Cardiac septum (tissue), 1 donor: ENCODE measurements at regions of chr22 and their contacts with region 1.

Region 1: GRCh38 chr22:49936018-49936952 is 17.9 kb downstream of the CRELD2 start:
- DNase-seq: peak; percentile 98

Region 2: GRCh38 chr22:49960159-49961004 is 24.1 kb after region 1 on chr22 and contains the start of gene PIM3:
- intact Hi-C with region 1: loop called (anchors 2 kb)
- DNase-seq: peak; percentile 97
- total RNA-seq, gene PIM3: 31.3 TPM

Region 3: DNA sequence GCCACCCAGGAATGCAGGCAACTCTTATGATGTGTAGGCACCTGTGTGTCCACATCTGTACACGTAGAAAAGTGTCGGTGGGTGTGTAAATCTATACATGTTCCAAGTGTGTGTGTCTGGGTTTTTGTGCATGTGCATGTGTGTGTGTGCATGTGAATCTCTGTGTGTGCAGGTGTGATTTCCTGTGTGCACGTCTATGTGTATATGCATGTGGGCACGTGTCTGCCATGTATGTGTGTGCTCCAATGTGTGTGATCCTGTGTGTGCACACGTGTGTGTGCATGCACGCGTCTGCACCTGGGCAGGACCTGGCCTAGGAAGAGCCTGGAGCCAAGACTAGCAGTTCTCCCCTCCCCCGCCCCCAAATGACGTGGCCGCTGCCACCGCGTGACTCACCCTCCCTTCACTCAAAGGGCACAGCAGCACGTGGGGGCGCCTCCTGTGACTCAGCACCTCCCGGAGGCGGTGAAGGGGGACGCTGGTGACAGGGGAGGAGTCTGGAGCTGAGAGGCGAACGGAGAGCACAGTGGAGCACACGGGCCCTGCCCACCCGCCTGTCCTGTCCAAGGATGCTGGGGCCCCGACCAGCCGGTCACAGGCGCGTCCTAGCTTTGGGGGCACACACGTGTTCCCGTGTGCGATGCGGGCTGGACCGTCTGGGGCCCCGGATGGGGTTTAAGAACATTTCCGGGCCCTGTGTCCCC is 34.4 kb after region 1 on chr22:
- intact Hi-C with region 1: loop called (anchors 2 kb)
- DNase-seq: peak; percentile 97

Region 4: DNA sequence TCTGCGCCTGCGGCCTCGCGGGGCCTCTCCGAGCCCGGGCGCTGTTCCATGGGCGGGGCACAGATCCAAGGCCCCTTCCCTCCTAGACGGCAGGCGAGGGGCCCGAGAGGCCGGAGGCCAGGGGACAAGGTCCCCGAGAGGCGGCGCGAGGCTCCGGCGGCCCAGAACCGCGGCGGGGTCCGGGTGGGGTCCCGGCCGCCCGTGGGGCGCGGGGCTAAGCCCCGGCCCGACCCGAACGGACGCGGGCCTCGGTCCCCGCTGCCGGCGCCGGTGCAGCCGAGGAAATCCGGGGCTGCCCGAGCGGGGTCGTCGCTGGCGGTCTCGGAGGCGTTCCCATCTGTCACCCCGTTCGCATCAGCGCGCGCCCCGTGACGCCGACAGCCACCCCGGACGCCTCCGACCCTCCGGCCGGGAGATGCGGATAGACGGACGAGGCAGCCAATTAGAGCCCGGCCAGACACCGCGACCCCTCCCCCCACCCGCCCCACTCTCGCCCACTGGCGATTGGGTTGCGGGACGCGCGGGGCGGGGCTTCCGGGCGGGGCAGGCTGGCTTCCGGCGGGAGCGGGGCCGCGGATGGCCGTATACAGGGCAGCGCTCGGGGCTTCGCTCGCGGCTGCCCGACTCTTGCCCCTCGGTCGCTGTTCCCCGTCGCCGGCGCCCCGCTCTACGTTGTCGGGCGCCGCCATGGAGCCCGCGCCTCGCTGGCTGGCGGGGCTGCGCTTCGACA is 264.3 kb after region 1 on chr22 and contains the start of gene SELENOO:
- intact Hi-C with region 1: loop called (anchors 10 kb)
- DNase-seq: peak; percentile 95
- total RNA-seq, gene SELENOO: 12.7 TPM